Naive thymus-derived CD4-positive, alpha-beta T cell (primary cell): ENCODE measurements at regions of chr10 and their contacts with region 1.

Region 1: DNA sequence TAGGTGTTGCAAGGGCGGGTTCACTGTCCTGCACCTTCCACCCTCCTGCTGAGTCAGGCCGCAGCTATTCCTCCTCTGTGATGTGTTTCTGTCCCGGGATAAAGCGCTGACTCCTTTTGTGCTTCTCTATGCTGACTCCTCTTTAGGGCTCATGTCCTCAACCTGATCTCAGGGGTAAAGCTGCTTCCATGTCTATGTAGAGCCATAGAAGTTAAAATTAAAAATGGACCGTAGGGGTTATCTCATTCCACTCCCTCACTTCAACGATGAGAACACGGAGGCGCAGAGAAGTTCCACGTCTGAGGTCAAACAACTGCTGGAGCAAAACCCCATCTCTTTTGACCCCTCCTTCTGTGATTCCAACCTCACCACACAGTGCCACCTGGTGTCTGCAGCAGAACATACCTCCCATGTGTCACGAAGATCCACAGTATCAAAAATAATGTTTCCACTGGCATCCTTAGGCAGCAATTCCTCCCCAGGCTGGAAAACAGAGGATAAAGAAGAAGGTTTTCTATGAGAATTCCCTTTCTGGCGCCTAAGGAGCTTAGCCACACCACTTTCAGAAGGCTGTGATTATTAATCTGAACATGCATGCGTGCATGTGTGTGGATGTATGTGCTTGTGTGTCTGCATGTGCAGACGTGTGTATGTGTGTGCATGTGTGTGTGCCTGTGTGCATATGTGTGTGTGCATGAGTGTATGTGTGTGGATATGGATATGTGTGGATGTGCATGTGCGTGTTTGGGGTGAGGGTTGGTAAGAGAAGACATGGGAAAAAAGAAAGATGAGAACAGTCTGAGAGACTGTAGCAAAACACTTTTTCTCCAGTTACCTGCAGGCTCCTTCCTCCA is 81.2 kb upstream of the UCN3 start:
- DNase-seq: peak; percentile 19 to 60 (median 46)
- ATAC-seq: peak; percentile 89
- H3K4me3 ChIP-seq: no peak overlapping the region
- H3K4me3 Mint-ChIP-seq: peak overlapping the region; percentile 4 to 67 (median 56)
- H3K27ac ChIP-seq: no peak overlapping the region
- H3K27ac Mint-ChIP-seq: peak overlapping the region in 4 of 9 donors; percentile 12 to 81 (median 42)
- H3K4me1 ChIP-seq: peaks cover 6 to 11% of the 10 kb centered on the region in 2 donors
- H3K4me1 Mint-ChIP-seq: peaks cover 10 to 37% (median 25%) of the 10 kb centered on the region in 7 donors
- H3K27me3 ChIP-seq: no peaks in the 10 kb centered on the region
- H3K27me3 Mint-ChIP-seq: peaks cover 0 to 26% (median 0%) of the 10 kb centered on the region in 5 donors

Region 2: DNA sequence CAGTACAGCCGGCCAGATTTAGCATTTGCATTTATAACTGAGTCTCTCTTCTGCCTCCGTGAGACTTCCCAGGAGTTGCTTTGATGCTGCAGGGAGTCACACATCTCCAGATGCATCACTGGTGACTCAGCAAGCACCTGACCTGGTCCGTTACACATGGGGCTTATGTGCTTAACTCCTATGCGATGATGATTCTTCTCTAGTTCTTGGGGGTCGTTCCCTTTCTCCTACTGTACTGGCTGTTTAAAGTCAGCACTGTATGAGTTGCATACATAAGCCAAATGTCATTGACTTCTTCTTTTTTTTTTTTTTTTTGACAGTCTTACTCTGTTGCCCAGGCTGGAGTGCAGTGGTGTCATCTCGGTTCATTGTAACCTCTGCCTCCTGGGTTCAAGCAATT is 470.5 kb before region 1 on chr10:
- CTCF ChIA-PET with region 1: interaction called, 5 read pairs
- POLR2A ChIA-PET with region 1: no interaction called
- intact Hi-C with region 1: loop called (anchors 1 kb)
- DNase-seq: no peak
- ATAC-seq: peak; percentile 35
- H3K4me3 ChIP-seq: no peak overlapping the region
- H3K4me3 Mint-ChIP-seq: no peak overlapping the region
- H3K27ac ChIP-seq: no peak overlapping the region
- H3K27ac Mint-ChIP-seq: no peak overlapping the region
- H3K4me1 ChIP-seq: no peaks in the 10 kb centered on the region
- H3K4me1 Mint-ChIP-seq: peaks cover 0 to 4% (median 0%) of the 10 kb centered on the region in 7 donors
- H3K27me3 ChIP-seq: no peaks in the 10 kb centered on the region
- H3K27me3 Mint-ChIP-seq: peaks cover 0 to 14% (median 8%) of the 10 kb centered on the region in 5 donors

Region 3: GRCh38 chr10:5094265-5095205 is 189.0 kb before region 1 on chr10 and contains the start of gene AKR1C3:
- CTCF ChIA-PET with region 1: interaction called, 3 read pairs
- POLR2A ChIA-PET with region 1: no interaction called
- intact Hi-C with region 1: loop called (anchors 1 kb)
- DNase-seq: peak in 6 of 9 donors; percentile 24 to 53 (median 36)
- ATAC-seq: peak; percentile 77
- H3K4me3 ChIP-seq: peak within 1 kb of the TSS; percentile 69
- H3K4me3 Mint-ChIP-seq: peak within 1 kb of the TSS; percentile 71 to 95 (median 91)
- H3K27ac ChIP-seq: no peak within 1 kb of the TSS
- H3K27ac Mint-ChIP-seq: peak within 1 kb of the TSS in 6 of 9 donors; percentile 35 to 90 (median 61)
- H3K4me1 ChIP-seq: no peaks in the 10 kb centered on the region
- H3K4me1 Mint-ChIP-seq: peaks cover 0 to 25% (median 15%) of the 10 kb centered on the region in 7 donors
- H3K27me3 ChIP-seq: no peaks in the 10 kb centered on the region
- H3K27me3 Mint-ChIP-seq: peaks cover 0 to 44% (median 13%) of the 10 kb centered on the region in 5 donors
- total RNA-seq, gene AKR1C3: 2.9 to 14.1 (median 5.8) TPM

Region 4: GRCh38 chr10:5151076-5151475 is 132.5 kb before region 1 on chr10:
- CTCF ChIA-PET with region 1: no interaction called
- POLR2A ChIA-PET with region 1: no interaction called
- intact Hi-C with region 1: no loop called
- DNase-seq: no peak
- ATAC-seq: no peak
- H3K4me3 ChIP-seq: no peak overlapping the region
- H3K4me3 Mint-ChIP-seq: no peak overlapping the region
- H3K27ac ChIP-seq: no peak overlapping the region
- H3K27ac Mint-ChIP-seq: no peak overlapping the region
- H3K4me1 ChIP-seq: no peaks in the 10 kb centered on the region
- H3K4me1 Mint-ChIP-seq: no peaks in the 10 kb centered on the region
- H3K27me3 ChIP-seq: no peaks in the 10 kb centered on the region
- H3K27me3 Mint-ChIP-seq: peaks cover 0 to 16% (median 2%) of the 10 kb centered on the region in 5 donors

Region 5: DNA sequence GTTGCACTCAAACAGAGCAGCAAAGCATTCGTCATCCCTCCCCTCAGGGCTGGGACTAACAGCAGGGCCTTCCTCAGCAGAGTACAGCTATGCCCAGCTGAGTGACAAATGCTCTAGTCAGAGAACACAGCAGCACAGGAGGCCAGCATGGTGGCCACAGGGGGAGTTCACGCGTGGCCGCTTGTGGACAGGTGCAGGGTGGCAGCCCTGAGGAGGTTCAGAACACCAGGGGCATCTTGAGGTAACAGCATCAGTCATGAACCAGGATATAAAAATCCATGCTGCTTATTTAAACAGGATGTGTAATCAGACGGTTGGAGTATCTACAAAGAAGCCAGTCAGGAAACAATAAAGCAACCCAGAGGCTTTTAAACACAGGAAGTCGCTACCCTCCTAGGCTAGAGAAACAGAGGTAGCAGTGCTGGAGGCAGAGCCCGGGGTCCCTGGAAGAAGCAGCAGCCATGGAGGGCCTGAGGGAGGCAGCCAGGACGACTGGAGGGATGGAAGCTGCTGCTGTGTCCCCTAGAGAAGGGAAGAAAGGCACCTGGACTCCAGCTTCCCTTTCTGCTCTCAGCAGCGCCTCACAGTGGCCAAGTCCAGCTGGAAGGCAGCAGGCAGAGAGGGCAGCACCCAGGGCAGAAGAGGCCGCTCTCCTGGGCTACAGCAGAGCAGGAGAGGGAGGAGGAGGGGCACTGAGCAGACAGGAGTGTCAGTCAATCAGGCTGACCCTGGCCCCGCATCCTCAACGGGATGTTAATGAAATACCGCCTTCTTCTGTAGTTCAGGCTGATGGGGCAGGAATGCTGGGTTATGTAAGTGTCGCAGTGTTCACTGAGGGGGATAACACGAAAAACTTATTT is 10.4 kb after region 1 on chr10:
- CTCF ChIA-PET with region 1: interaction called, 7 read pairs
- POLR2A ChIA-PET with region 1: interaction called, 30 read pairs
- intact Hi-C with region 1: loop called (anchors 1 kb)
- DNase-seq: peak; percentile 52 to 78 (median 67)
- ATAC-seq: peak; percentile 60
- H3K4me3 ChIP-seq: peak overlapping the region; percentile 58
- H3K4me3 Mint-ChIP-seq: peak overlapping the region; percentile 82 to 100 (median 94)
- H3K27ac ChIP-seq: peak overlapping the region; percentile 71
- H3K27ac Mint-ChIP-seq: peak overlapping the region in 8 of 9 donors; percentile 88 to 100 (median 98)
- H3K4me1 ChIP-seq: peaks cover 47 to 49% of the 10 kb centered on the region in 2 donors
- H3K4me1 Mint-ChIP-seq: peaks cover 61 to 96% (median 80%) of the 10 kb centered on the region in 7 donors
- H3K27me3 ChIP-seq: no peaks in the 10 kb centered on the region
- H3K27me3 Mint-ChIP-seq: no peaks in the 10 kb centered on the region

Region 6: DNA sequence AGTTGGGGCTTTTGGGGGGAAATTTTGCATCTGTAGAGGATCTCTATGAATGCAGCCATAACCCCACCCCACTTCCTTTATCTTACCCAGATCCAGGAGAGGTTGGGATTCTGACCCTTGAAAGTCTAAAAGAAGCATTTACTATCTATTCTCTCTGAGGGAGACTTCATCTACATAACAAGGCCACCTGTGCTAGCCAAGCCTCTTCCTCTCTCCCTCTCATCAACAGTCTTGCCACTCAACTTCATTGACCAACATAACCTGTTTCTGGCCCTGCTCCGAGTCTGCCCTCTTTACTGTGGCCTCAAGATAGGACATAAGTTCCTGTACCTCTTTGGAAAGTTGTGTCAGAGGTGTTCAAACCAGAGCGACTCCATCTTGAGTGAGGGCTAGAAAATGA is 101.7 kb after region 1 on chr10:
- CTCF ChIA-PET with region 1: interaction called, 6 read pairs
- POLR2A ChIA-PET with region 1: interaction called, 7 read pairs
- intact Hi-C with region 1: loop called (anchors 1 to 2 kb)
- DNase-seq: no peak
- ATAC-seq: no peak
- H3K4me3 ChIP-seq: no peak overlapping the region
- H3K4me3 Mint-ChIP-seq: peak overlapping the region in 1 of 10 donors; percentile 13
- H3K27ac ChIP-seq: no peak overlapping the region
- H3K27ac Mint-ChIP-seq: no peak overlapping the region
- H3K4me1 ChIP-seq: no peaks in the 10 kb centered on the region
- H3K4me1 Mint-ChIP-seq: peaks cover 0 to 5% (median 0%) of the 10 kb centered on the region in 7 donors
- H3K27me3 ChIP-seq: no peaks in the 10 kb centered on the region
- H3K27me3 Mint-ChIP-seq: peaks cover 0 to 15% (median 5%) of the 10 kb centered on the region in 5 donors

Region 7: GRCh38 chr10:5434017-5434753 is 150.7 kb after region 1 on chr10:
- CTCF ChIA-PET with region 1: interaction called, 3 read pairs
- POLR2A ChIA-PET with region 1: no interaction called
- intact Hi-C with region 1: loop called (anchors 1 to 5 kb)
- DNase-seq: peak in 5 of 9 donors; percentile 31 to 54 (median 38)
- ATAC-seq: peak; percentile 84
- H3K4me3 ChIP-seq: no peak overlapping the region
- H3K4me3 Mint-ChIP-seq: peak overlapping the region in 3 of 10 donors; percentile 8 to 25 (median 10)
- H3K27ac ChIP-seq: no peak overlapping the region
- H3K27ac Mint-ChIP-seq: peak overlapping the region in 4 of 9 donors; percentile 49 to 81 (median 56)
- H3K4me1 ChIP-seq: peaks cover 0 to 10% of the 10 kb centered on the region in 2 donors
- H3K4me1 Mint-ChIP-seq: peaks cover 4 to 15% (median 11%) of the 10 kb centered on the region in 7 donors
- H3K27me3 ChIP-seq: peaks cover 0 to 3% of the 10 kb centered on the region in 2 donors
- H3K27me3 Mint-ChIP-seq: no peaks in the 10 kb centered on the region